Heart left ventricle (tissue), 16 donors: ENCODE measurements at regions of chr4 and their contacts with region 1.

Region 1: GRCh38 chr4:145481164-145481941 is at the start of gene SMAD1:
- DNase-seq: peak; percentile 86 to 92 (median 91)
- ATAC-seq: peak; percentile 95 to 97 (median 95)
- H3K4me3 ChIP-seq: peak within 1 kb of the TSS; percentile 70 to 99 (median 85)
- H3K27ac ChIP-seq: peak within 1 kb of the TSS; percentile 92 to 99 (median 97)
- H3K4me1 ChIP-seq: peaks cover 0 to 39% (median 18%) of the 10 kb centered on the region in 12 donors
- H3K27me3 ChIP-seq: no peaks in the 10 kb centered on the region
- CTCF ChIP-seq: peak in 1 of 12 donors; percentile 9
- POLR2A ChIP-seq: peak in 1 of 2 donors; percentile 63
- total RNA-seq, gene SMAD1: 9.0 to 21.4 (median 15.2) TPM

Region 2: DNA sequence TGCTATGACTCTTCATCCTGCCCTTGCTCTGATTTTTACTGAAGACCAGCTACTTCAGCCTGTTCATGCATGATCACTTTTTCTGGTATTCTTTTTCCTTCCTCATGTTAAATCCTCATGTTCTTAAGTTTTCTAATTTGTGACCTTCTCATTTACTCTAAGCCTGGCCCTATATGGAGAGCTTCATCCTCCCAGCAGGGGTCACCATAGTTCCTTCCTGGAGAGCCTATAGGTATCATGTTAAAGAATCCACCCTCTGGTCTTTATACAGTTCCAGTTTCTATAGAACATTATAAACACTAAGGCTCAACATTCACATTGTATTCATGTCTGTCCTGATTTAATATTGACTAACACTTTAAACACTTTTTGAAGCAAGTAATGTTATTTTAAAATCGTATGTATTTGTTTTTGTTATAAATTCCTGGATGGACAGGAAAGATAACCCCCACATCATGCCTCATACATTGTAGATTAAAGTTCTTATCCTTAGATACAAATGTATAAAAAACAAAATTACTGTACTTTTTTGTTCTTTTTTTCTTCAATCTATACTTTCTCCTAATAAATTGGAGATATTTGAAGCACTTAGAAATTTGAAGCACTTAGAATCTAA is 247.2 kb before region 1 on chr4:
- intact Hi-C with region 1: loop called in 3 of 10 experiments (anchors 5 to 10 kb)
- DNase-seq: peak in 3 of 5 donors; percentile 24 to 44 (median 36)
- ATAC-seq: peak; percentile 73 to 83 (median 81)
- H3K4me3 ChIP-seq: no peak overlapping the region
- H3K27ac ChIP-seq: no peak overlapping the region
- H3K4me1 ChIP-seq: no peaks in the 10 kb centered on the region
- H3K27me3 ChIP-seq: no peaks in the 10 kb centered on the region
- CTCF ChIP-seq: peak; percentile 69 to 84 (median 74)
- POLR2A ChIP-seq: no peak

Region 3: DNA sequence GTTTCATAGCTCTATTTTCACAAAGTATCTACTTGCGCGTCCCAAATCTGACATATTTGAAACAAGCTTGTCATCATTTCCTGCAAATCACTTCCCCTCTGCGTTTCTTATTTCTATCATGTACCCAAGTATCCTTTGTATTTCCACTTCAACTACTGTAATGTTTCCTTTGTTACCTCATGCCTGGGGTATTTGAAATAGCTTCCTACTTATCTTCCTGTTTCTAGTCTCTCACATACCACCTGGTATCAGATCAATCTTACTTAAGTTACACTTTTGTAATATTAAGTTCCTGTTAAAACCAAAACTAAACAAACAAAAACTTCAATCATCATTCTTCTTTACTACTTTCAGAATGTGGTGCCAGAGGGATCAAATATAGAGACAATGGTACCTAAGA is 93.3 kb before region 1 on chr4:
- intact Hi-C with region 1: no loop called
- DNase-seq: no peak
- ATAC-seq: peak in 1 of 4 donors; percentile 57
- H3K4me3 ChIP-seq: no peak overlapping the region
- H3K27ac ChIP-seq: no peak overlapping the region
- H3K4me1 ChIP-seq: no peaks in the 10 kb centered on the region
- H3K27me3 ChIP-seq: no peaks in the 10 kb centered on the region
- CTCF ChIP-seq: no peak
- POLR2A ChIP-seq: no peak

Region 4: DNA sequence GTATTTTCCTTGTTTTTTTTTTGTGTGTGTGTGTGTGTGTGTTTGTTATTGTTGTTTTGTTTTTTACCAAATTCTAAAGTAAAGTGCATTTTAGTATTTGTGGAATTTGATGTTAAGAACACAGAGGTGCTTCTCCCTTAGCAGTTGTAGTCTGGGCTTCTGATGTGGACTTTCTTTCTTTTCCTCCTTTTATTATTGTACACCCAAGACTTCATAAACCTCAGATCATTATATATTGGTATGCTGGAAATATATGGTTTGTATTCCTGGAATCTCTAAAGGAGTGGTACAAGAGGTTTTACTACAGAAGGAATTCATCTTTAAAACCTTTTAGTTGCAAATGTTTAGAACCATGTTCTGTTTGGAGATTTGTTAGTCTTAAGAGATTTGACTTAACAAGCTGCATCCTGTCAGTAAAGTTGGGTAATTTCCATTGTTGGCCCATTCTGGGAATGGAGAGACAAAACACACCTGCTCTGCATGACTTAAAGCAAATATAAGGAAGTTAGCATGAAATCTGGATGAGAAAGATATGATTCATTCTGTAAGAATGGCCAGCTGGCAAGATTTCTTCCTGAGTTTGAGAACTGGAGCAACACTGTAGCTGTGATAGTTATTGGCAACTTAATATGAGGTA is 64.3 kb after region 1 on chr4:
- intact Hi-C with region 1: loop called in 4 of 10 experiments (anchors 5 to 10 kb)
- DNase-seq: no peak
- ATAC-seq: peak in 3 of 4 donors; percentile 62 to 78 (median 77)
- H3K4me3 ChIP-seq: no peak overlapping the region
- H3K27ac ChIP-seq: peak overlapping the region in 10 of 12 donors; percentile 6 to 60 (median 34)
- H3K4me1 ChIP-seq: peaks cover 0 to 41% (median 17%) of the 10 kb centered on the region in 12 donors
- H3K27me3 ChIP-seq: no peaks in the 10 kb centered on the region
- CTCF ChIP-seq: no peak
- POLR2A ChIP-seq: no peak

Region 5: GRCh38 chr4:145557720-145558119 is 76.4 kb after region 1 on chr4:
- intact Hi-C with region 1: loop called in 6 of 10 experiments (anchors 2 to 10 kb)
- DNase-seq: peak in 4 of 5 donors; percentile 41 to 57 (median 46)
- ATAC-seq: peak; percentile 77 to 89 (median 87)
- H3K4me3 ChIP-seq: no peak overlapping the region
- H3K27ac ChIP-seq: no peak overlapping the region
- H3K4me1 ChIP-seq: no peaks in the 10 kb centered on the region
- H3K27me3 ChIP-seq: no peaks in the 10 kb centered on the region
- CTCF ChIP-seq: peak; percentile 75 to 96 (median 86)
- POLR2A ChIP-seq: no peak

Region 6: DNA sequence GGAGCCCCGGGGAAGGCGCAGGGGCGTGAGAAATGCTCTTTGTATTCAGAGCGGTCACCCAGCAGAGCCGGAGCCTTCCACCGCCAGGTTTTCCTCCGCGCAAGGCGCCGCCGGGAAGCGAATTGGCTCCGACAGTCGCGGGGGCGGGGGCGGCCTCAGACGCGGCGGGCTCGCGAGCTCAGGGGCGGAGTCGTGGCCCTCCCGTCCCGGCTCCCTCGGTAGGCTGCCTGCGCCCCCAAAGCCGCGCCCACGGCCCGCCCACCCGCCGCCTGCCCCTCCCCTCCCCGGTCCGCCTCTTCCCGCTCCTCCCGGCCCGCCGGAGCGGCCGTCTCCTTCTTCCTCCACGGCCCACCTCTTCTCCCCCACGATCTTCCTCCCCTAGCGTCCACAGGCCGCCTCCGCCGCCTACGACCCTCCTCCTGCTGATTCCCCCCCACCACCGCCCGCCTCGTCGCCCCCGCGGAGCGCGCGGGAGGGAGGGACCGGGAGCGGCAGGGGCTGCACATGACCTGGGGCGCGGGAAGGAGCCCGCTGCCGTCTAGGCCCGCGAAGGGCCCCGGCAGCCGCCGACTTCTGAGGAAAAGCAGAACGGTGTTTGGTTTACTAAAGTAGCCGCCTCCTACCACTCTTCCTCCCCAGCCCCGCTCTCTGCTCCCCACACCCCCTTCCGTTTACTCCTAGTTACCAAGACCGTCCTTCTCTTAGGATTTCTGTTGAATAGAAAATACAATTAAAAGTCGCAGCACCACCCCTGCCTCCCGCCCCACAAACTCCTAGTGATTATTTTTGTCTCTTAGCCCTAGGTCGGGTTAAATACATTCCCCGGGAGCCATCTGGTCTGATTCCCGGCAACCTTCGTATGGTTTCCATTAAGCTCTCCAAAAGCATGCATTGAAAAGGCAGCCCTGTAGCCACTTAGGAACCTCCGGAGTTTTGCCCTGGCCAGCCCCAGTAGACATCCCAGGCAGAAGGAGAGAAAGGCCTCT is 251.8 kb after region 1 on chr4:
- intact Hi-C with region 1: loop called in 1 of 10 experiments (anchors 10 kb)
- DNase-seq: peak; percentile 97
- ATAC-seq: peak; percentile 81 to 96 (median 93)
- H3K4me3 ChIP-seq: peak overlapping the region; percentile 8 to 82 (median 66)
- H3K27ac ChIP-seq: peak overlapping the region; percentile 88 to 99 (median 96)
- H3K4me1 ChIP-seq: peaks cover 13 to 57% (median 46%) of the 10 kb centered on the region in 12 donors
- H3K27me3 ChIP-seq: no peaks in the 10 kb centered on the region
- CTCF ChIP-seq: peak in 3 of 12 donors; percentile 2 to 36 (median 14)
- POLR2A ChIP-seq: peak in 1 of 2 donors; percentile 76